Breast epithelium (tissue), 4 donors: ENCODE measurements at regions of chr4 and their contacts with region 1.

Region 1: GRCh38 chr4:79340564-79340963 is 14.7 kb upstream of the NAA11 start:
- DNase-seq: no peak
- H3K4me3 ChIP-seq: no peak overlapping the region
- H3K27ac ChIP-seq: no peak overlapping the region
- H3K4me1 ChIP-seq: no peaks in the 10 kb centered on the region
- H3K27me3 ChIP-seq: no peaks in the 10 kb centered on the region
- CTCF ChIP-seq: no peak
- POLR2A ChIP-seq: no peak

Region 2: GRCh38 chr4:79385641-79386040 is 45.1 kb after region 1 on chr4:
- intact Hi-C with region 1: loop called (anchors 2 kb)
- DNase-seq: no peak
- H3K4me3 ChIP-seq: no peak overlapping the region
- H3K27ac ChIP-seq: no peak overlapping the region
- H3K4me1 ChIP-seq: no peaks in the 10 kb centered on the region
- H3K27me3 ChIP-seq: no peaks in the 10 kb centered on the region
- CTCF ChIP-seq: no peak
- POLR2A ChIP-seq: no peak